ENCODE measurements at regions of chr17 and their contacts with region 1.

Region 1: GRCh38 chr17:75261336-75262111 is at the starts of genes GGA3 and MRPS7:
- DNase-seq: peak; percentile 96
- H3K4me3 Mint-ChIP-seq: peak within 1 kb of the TSS; percentile 96
- H3K27ac Mint-ChIP-seq: peak within 1 kb of the TSS; percentile 99
- H3K4me1 Mint-ChIP-seq: peaks cover 53% of the 10 kb centered on the region
- H3K27me3 Mint-ChIP-seq: no peaks in the 10 kb centered on the region
- total RNA-seq, gene GGA3: 73.4 to 79.4 TPM
- total RNA-seq, gene MRPS7: 39.7 to 40.0 TPM

Region 2: GRCh38 chr17:75168998-75169397 is 92.5 kb before region 1 on chr17:
- CTCF ChIA-PET with region 1: no interaction called
- POLR2A ChIA-PET with region 1: no interaction called
- DNase-seq: no peak
- H3K4me3 Mint-ChIP-seq: no peak overlapping the region
- H3K27ac Mint-ChIP-seq: no peak overlapping the region
- H3K4me1 Mint-ChIP-seq: peaks cover 22% of the 10 kb centered on the region
- H3K27me3 Mint-ChIP-seq: no peaks in the 10 kb centered on the region

Region 3: DNA sequence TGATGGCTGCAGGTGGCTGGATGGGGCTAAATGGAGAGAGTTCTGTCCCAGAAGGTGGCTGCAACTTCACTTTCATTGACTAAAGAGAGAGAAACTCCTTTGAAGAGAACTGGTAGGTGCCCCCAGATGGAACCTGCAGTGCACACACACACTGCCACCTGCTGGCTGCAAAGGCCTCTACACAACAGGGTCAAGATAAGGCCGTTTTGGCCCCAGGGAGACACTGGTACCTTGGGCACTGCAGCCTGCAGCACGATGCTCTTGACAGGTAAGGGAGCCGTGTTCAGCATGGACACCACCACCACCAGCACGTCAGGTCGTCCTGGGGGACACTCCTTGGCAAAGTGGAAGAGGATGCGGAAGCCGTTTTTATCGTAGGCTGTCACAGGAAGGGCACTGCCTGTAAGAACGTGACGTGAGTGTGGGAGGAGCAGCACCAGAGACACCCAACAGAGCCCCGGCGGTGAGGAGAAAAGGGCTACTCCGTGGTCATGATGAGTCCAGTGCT is 22.8 kb before region 1 on chr17:
- CTCF ChIA-PET with region 1: interaction called, 20 read pairs
- POLR2A ChIA-PET with region 1: interaction called, 96 read pairs
- DNase-seq: peak; percentile 67
- H3K4me3 Mint-ChIP-seq: peak overlapping the region; percentile 57
- H3K27ac Mint-ChIP-seq: peak overlapping the region; percentile 87
- H3K4me1 Mint-ChIP-seq: peaks cover 41% of the 10 kb centered on the region
- H3K27me3 Mint-ChIP-seq: no peaks in the 10 kb centered on the region

Region 4: GRCh38 chr17:75250009-75250471 is 11.5 kb before region 1 on chr17:
- CTCF ChIA-PET with region 1: interaction called, 11 read pairs
- POLR2A ChIA-PET with region 1: interaction called, 96 read pairs
- DNase-seq: peak; percentile 77
- H3K4me3 Mint-ChIP-seq: peak overlapping the region; percentile 73
- H3K27ac Mint-ChIP-seq: peak overlapping the region; percentile 86
- H3K4me1 Mint-ChIP-seq: peaks cover 40% of the 10 kb centered on the region
- H3K27me3 Mint-ChIP-seq: no peaks in the 10 kb centered on the region

Region 5: DNA sequence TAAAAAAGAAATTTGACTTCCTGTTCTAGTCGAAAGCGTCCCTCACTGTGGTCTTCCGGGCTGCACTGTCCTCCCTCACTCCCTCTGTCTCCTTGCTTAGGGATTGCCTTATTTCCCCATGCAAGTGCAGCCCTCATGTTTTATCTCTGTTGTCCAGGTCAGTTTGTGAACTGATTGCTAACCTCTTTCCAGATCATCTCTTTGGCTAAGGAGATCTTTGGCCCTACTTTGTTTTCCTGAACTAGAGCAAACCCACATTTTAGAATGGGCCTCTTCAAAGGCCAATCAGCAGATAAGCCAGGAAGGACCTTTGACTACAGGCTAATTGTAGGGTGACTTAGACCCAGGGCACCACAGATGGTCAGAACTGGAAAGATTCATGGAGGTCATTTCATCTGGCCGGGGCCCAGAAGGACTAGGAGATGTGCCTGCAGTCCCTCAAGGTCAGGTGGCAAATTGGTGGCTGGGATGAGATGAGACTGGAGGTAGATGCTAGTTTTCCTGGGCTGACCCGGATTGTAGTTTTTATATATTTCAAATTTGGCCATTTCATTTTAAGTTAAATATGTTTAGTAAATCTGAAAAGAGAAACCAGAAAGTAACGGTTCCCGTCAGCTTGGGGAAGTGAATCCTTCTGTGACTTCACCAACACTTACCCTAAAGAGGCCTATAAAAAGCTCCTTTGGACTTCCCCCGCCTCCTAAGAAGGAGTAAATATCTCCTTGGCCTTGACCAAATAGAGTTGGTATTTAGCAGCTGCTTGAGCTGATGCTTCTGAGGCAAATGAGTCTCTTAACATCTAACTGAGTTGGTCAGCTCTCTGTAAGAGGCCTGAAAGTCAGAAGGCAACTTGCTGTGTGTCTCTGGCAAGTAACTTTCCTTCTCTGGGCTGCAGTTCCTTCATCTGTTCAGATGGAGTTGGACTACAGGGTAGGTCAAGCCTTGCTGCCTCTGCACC is 34.0 kb after region 1 on chr17:
- CTCF ChIA-PET with region 1: interaction called, 22 read pairs
- POLR2A ChIA-PET with region 1: interaction called, 10 read pairs
- DNase-seq: no peak
- H3K4me3 Mint-ChIP-seq: peak overlapping the region; percentile 46
- H3K27ac Mint-ChIP-seq: peak overlapping the region; percentile 87
- H3K4me1 Mint-ChIP-seq: peaks cover 36% of the 10 kb centered on the region
- H3K27me3 Mint-ChIP-seq: no peaks in the 10 kb centered on the region

Region 6: GRCh38 chr17:75412455-75413317 is 151.2 kb after region 1 on chr17:
- CTCF ChIA-PET with region 1: interaction called, 11 read pairs
- POLR2A ChIA-PET with region 1: interaction called, 6 read pairs
- DNase-seq: peak; percentile 81
- H3K4me3 Mint-ChIP-seq: no peak overlapping the region
- H3K27ac Mint-ChIP-seq: peak overlapping the region; percentile 29
- H3K4me1 Mint-ChIP-seq: peaks cover 26% of the 10 kb centered on the region
- H3K27me3 Mint-ChIP-seq: peaks cover 12% of the 10 kb centered on the region